Activated B cell treated with CpG ODN at 0.5 μM for 24 hours (primary cell): ENCODE measurements at regions of chr2 and their contacts with region 1.

Region 1: GRCh38 chr2:25420820-25421237 is 79.1 kb upstream of the DNMT3A start:
- DNase-seq: no peak
- ATAC-seq: peak; percentile 29
- H3K4me3 Mint-ChIP-seq: peak overlapping the region; percentile 93
- H3K27ac Mint-ChIP-seq: peak overlapping the region; percentile 95
- H3K4me1 Mint-ChIP-seq: peaks cover 97% of the 10 kb centered on the region
- H3K27me3 Mint-ChIP-seq: no peaks in the 10 kb centered on the region
- CTCF ChIP-seq: no peak

Region 2: GRCh38 chr2:25342372-25343186 is 78.2 kb before region 1 on chr2:
- CTCF ChIA-PET with region 1: no interaction called
- POLR2A ChIA-PET with region 1: interaction called, 8 read pairs
- intact Hi-C with region 1: loop called (anchors 2 kb)
- DNase-seq: peak; percentile 82
- ATAC-seq: peak; percentile 92
- H3K4me3 Mint-ChIP-seq: peak overlapping the region; percentile 84
- H3K27ac Mint-ChIP-seq: peak overlapping the region; percentile 59
- H3K4me1 Mint-ChIP-seq: peaks cover 19% of the 10 kb centered on the region
- H3K27me3 Mint-ChIP-seq: peaks cover 1% of the 10 kb centered on the region
- CTCF ChIP-seq: peak; percentile 74

Region 3: DNA sequence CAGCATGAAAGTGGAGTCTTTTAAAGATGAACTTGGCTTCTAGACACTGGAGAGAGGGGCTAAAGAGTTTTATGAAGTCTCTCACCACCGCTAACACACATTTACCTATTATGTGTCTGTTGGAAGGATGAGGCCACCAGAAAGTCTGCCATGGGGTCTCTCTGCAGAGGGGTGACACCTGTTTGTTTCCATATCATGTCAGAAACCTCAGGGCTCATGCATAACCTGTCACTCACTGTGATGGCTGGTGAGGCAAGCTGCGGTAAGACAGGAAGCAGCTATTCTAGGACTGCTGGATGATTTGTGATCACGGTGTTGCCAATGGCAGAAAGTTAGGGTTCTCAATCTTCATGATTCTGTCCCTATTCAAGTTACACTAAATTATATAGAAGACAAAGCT is 18.4 kb before region 1 on chr2:
- CTCF ChIA-PET with region 1: interaction called, 9 read pairs
- POLR2A ChIA-PET with region 1: interaction called, 214 read pairs
- intact Hi-C with region 1: loop called (anchors 1 kb)
- DNase-seq: no peak
- ATAC-seq: peak; percentile 5
- H3K4me3 Mint-ChIP-seq: no peak overlapping the region
- H3K27ac Mint-ChIP-seq: peak overlapping the region; percentile 95
- H3K4me1 Mint-ChIP-seq: peaks cover 88% of the 10 kb centered on the region
- H3K27me3 Mint-ChIP-seq: no peaks in the 10 kb centered on the region
- CTCF ChIP-seq: no peak

Region 4: DNA sequence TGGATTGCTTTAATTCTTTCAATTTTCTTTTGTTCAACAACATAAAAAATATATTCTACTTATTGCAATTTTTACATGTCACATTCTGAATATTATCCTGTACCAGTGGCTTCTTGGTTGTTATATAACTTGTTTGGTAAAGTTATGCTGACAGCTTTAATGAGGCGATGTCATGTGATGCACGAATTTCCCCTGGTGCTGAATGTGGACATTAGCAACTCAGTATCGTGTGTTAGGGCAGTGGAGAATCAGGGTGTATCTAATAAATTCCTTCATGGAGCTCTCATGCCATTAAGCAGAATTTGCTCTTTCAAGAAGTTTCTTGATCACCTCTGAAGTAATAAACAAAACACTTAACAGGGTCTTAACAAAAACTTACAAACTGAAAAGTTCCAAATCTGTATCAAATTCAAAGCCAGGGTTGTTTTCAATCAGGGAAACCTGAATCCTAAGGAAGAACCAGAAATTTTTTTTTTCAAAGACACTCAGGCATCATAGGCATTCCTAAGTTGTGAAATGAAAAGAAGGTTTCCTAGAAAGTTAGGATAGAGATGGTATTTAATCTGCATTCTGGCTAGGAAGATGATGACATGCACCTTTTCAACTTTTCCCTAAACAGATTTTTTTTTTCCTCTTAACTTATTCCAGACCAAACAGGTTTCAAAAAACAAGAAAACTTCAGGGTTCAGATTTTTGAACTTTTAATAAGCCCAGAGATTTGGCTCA is 20.7 kb after region 1 on chr2:
- CTCF ChIA-PET with region 1: interaction called, 3 read pairs
- POLR2A ChIA-PET with region 1: interaction called, 6 read pairs
- intact Hi-C with region 1: loop called (anchors 2 kb)
- DNase-seq: no peak
- ATAC-seq: no peak
- H3K4me3 Mint-ChIP-seq: no peak overlapping the region
- H3K27ac Mint-ChIP-seq: no peak overlapping the region
- H3K4me1 Mint-ChIP-seq: peaks cover 38% of the 10 kb centered on the region
- H3K27me3 Mint-ChIP-seq: no peaks in the 10 kb centered on the region
- CTCF ChIP-seq: no peak

Region 5: GRCh38 chr2:25453199-25453905 is 32.5 kb after region 1 on chr2:
- CTCF ChIA-PET with region 1: interaction called, 3 read pairs
- POLR2A ChIA-PET with region 1: interaction called, 18 read pairs
- intact Hi-C with region 1: loop called (anchors 5 kb)
- DNase-seq: no peak
- ATAC-seq: peak; percentile 85
- H3K4me3 Mint-ChIP-seq: peak overlapping the region; percentile 44
- H3K27ac Mint-ChIP-seq: peak overlapping the region; percentile 82
- H3K4me1 Mint-ChIP-seq: peaks cover 39% of the 10 kb centered on the region
- H3K27me3 Mint-ChIP-seq: no peaks in the 10 kb centered on the region
- CTCF ChIP-seq: no peak

Region 6: DNA sequence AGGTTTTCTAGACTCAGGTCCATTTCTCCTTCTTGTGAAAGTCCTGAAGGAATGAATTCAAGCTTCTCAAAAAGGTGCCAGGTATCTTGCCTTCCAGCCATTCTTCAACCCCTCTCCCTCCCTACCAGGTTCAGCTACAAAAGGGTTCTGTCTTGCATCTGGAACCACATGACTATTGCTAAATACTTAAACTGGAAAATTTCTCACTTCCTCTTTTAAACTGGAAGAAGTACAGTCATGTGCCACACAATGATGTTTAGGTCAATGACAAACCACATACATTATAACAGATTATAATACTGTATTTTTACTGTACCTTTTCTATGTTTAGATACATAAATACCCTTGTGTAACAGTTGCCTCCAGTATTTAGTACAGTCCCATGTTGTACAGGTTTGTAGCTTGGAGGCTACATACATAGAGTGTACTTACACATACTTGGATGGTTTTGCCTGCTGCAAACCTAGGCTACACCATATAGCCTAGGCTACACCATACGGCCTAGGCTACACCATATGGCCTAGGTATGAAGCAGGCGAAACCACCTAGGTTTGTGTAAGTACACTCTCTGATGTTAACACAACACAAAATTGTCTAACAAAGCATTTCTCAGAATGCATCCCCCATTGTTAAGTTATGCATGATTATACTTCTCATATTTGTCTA is 62.9 kb after region 1 on chr2:
- CTCF ChIA-PET with region 1: no interaction called
- POLR2A ChIA-PET with region 1: interaction called, 5 read pairs
- intact Hi-C with region 1: loop called (anchors 1 kb)
- DNase-seq: no peak
- ATAC-seq: peak; percentile 83
- H3K4me3 Mint-ChIP-seq: peak overlapping the region; percentile 45
- H3K27ac Mint-ChIP-seq: peak overlapping the region; percentile 59
- H3K4me1 Mint-ChIP-seq: peaks cover 43% of the 10 kb centered on the region
- H3K27me3 Mint-ChIP-seq: no peaks in the 10 kb centered on the region
- CTCF ChIP-seq: no peak

Region 7: DNA sequence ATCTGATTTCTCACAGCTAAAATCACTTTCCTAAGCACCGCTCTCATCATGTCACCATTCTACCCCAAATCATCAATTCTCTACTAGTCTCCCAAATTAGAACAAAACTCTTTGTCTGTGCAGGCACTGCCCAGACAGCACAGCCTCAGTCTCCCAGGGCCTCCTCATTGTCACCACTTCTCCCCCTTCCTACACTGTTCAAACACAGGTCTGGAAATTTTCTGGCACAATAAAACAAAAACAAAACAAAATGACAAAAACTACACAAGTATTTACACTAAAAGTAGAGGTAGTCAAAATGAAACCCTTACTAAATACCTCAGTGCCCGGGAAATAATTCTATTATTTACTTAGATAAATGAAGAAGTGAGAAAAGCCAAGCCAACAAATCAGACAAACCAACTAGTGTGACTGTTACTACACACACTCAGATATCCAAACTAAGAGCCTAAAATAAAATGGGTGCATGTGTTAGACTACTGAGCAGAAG is 77.1 kb after region 1 on chr2:
- CTCF ChIA-PET with region 1: no interaction called
- POLR2A ChIA-PET with region 1: interaction called, 23 read pairs
- intact Hi-C with region 1: no loop called
- DNase-seq: no peak
- ATAC-seq: peak; percentile 78
- H3K4me3 Mint-ChIP-seq: peak overlapping the region; percentile 39
- H3K27ac Mint-ChIP-seq: peak overlapping the region; percentile 83
- H3K4me1 Mint-ChIP-seq: peaks cover 23% of the 10 kb centered on the region
- H3K27me3 Mint-ChIP-seq: no peaks in the 10 kb centered on the region
- CTCF ChIP-seq: no peak